ENCODE measurements at regions of chr3 and their contacts with region 1.

Region 1: DNA sequence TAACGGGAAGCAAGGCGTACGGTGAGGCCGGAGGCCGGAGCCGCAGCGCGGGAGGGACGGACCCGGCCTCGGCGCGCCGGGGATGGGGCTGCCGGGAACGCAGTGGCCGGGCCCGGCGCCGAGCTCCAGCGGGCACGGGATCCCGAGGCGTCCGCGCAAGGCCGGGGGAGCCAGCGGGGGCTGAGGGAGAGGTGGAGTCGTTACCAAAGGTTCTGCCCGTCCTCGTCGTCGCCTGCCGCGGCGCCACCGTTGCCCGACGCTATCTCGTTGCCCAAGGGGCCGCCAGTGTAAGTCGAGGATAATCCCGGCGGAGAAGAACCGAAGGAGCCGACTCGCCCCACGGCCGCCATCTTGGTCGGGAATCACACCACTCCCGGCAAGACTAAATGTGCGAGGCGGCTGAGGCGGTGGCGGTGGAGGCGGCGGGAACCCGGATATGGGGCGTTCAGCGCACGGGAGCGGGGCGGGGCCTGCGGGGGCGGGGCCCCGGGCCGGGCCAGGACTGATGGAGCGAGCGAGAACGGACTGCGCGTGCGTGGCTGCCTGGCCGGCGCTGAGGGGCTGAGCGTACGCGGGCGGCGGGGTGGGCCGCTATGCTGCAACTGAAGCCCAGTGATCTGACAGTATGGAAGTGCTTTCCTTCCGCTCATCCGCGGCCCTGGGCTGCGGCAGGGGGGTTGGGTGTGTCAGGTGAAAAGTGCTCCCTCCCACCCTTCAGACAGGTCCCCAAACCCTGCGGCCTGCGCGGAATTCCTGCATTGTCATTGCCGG is at the start of gene DYNC1LI1:
- DNase-seq: peak; percentile 97 to 98 (median 98)
- ATAC-seq: peak; percentile 92
- H3K4me3 ChIP-seq: peak within 1 kb of the TSS; percentile 72
- H3K27ac ChIP-seq: peak within 1 kb of the TSS; percentile 86
- H3K4me1 ChIP-seq: peaks cover 10 to 11% of the 10 kb centered on the region in 2 experiments; a peak in 3 of 5 replicates
- H3K27me3 ChIP-seq: no peaks in the 10 kb centered on the region
- CTCF ChIP-seq: no peak
- EP300 ChIP-seq: no peak
- POLR2A ChIP-seq: peak; percentile 96
- RAD21 ChIP-seq: no peak
- polyA plus RNA-seq, gene DYNC1LI1: 21.0 to 26.0 TPM

Region 2: GRCh38 chr3:32502118-32502945 is 68.3 kb before region 1 on chr3 and contains the start of gene CMTM6:
- CTCF ChIA-PET with region 1: no interaction called
- POLR2A ChIA-PET with region 1: interaction called, 3 read pairs
- in situ Hi-C with region 1: no loop called
- intact Hi-C with region 1: loop called (anchors 1 kb)
- DNase-seq: peak; percentile 90 to 97 (median 97)
- ATAC-seq: peak; percentile 90
- H3K4me3 ChIP-seq: peak within 1 kb of the TSS; percentile 94
- H3K27ac ChIP-seq: peak within 1 kb of the TSS; percentile 86
- H3K4me1 ChIP-seq: peaks cover 13 to 22% of the 10 kb centered on the region in 2 experiments; a peak in 4 of 5 replicates
- H3K27me3 ChIP-seq: no peaks in the 10 kb centered on the region
- CTCF ChIP-seq: peak in 2 of 3 experiments; percentile 10 to 18; a peak in 1 of 6 replicates
- EP300 ChIP-seq: peak; percentile 63; the same call in 1 of the 2 replicates
- POLR2A ChIP-seq: peak; percentile 87
- RAD21 ChIP-seq: no peak
- polyA plus RNA-seq, gene CMTM6: 8.9 to 9.2 TPM

Region 3: DNA sequence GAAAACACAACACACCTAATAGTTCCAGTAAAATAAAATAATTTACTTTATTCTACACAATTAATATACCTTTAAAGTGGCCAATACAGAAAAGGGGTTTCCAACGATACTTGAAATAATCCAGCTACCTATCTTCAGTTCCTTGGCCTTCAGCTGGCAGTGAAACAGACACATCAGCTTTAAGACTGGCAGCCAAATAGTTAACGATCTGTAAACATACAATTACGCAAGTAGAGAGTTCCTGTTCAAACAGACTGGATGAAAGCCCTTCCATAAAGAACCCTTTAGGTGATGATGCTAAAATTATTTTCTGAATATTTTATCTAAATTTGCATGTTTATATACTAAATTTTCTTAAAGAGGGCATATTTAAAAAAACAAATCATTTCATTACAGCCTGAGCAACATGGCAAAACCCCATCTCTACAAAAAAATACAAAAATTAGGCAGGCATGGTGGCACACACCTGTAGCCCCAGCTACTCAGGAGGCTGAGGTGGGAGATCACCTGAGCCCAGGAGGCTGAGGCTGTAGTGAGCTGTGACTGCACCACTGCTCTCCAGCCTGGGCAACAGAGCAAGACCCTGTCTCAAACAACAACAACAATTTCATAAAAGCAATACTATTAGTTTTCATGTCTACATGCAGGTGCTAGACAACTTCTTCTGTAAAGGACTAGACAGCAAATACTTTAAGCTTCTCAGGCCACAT is 12.8 kb before region 1 on chr3:
- CTCF ChIA-PET with region 1: no interaction called
- POLR2A ChIA-PET with region 1: interaction called, 12 read pairs
- in situ Hi-C with region 1: no loop called
- intact Hi-C with region 1: no loop called
- DNase-seq: no peak
- ATAC-seq: no peak
- H3K4me3 ChIP-seq: no peak overlapping the region
- H3K27ac ChIP-seq: no peak overlapping the region
- H3K4me1 ChIP-seq: no peaks in the 10 kb centered on the region
- H3K27me3 ChIP-seq: no peaks in the 10 kb centered on the region
- CTCF ChIP-seq: no peak
- EP300 ChIP-seq: no peak
- POLR2A ChIP-seq: no peak
- RAD21 ChIP-seq: no peak

Region 4: GRCh38 chr3:32596909-32597369 is 26.3 kb after region 1 on chr3:
- CTCF ChIA-PET with region 1: no interaction called
- POLR2A ChIA-PET with region 1: interaction called, 3 read pairs
- in situ Hi-C with region 1: no loop called
- intact Hi-C with region 1: loop called (anchors 2 kb)
- DNase-seq: peak in 2 of 4 experiments; percentile 50 to 73
- ATAC-seq: peak; percentile 77
- H3K4me3 ChIP-seq: no peak overlapping the region
- H3K27ac ChIP-seq: no peak overlapping the region
- H3K4me1 ChIP-seq: peaks cover 13 to 16% of the 10 kb centered on the region in 2 experiments; a peak in 4 of 5 replicates
- H3K27me3 ChIP-seq: peaks cover 25 to 29% of the 10 kb centered on the region in 2 experiments
- CTCF ChIP-seq: no peak
- EP300 ChIP-seq: no peak
- POLR2A ChIP-seq: no peak
- RAD21 ChIP-seq: no peak